Gastrocnemius medialis (tissue), 4 donors: ENCODE measurements at regions of chr17 and their contacts with region 1.

Region 1: DNA sequence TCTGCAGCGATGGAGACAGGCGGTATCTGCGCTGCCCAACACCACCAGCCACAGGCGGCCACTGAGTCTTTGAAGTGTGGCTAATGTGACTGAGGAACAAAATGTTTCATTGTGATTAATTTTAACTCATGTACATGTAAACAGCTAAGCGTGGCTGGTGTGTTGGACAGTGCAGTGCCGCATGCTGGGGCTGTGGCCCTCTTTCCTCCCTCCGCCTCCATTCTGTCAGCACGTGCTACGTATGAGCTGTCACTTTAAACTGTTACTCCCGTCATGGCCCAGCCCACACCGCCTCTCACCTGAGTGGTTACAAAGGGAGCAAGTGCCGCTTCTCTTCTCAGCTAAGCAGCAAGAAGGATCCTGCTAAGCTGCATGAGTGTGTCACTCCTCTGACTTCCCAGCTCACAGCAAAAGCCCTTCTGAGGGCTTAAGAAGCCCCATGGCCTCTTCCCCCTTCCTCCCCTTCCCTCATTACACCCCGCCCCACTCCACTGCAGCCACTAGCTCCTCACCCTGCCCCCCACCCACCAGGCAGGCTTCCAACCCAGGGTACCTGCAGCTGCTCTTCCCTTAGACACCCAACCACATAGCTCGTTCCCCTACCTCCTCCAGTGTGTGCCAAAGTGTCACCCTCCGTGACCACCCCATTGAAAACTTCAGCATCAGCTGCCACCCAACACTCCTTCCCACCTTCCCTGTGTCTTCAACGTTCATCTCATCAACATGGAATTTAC is 15.0 kb downstream of the HASPIN start:
- DNase-seq: peak; percentile 56 to 79
- ATAC-seq: peak; percentile 49 to 84
- H3K4me3 ChIP-seq: peak overlapping the region; percentile 35 to 50 (median 44)
- H3K27ac ChIP-seq: peak overlapping the region; percentile 72 to 84 (median 80)
- H3K4me1 ChIP-seq: peaks cover 4 to 11% of the 10 kb centered on the region in 2 donors
- H3K27me3 ChIP-seq: no peaks in the 10 kb centered on the region
- CTCF ChIP-seq: no peak
- POLR2A ChIP-seq: peak; percentile 36 to 50

Region 2: GRCh38 chr17:3818786-3819185 is 80.1 kb after region 1 on chr17:
- in situ Hi-C with region 1: loop called in 3 of 4 experiments (anchors 5 to 10 kb)
- intact Hi-C with region 1: no loop called
- DNase-seq: no peak
- ATAC-seq: no peak
- H3K4me3 ChIP-seq: no peak overlapping the region
- H3K27ac ChIP-seq: no peak overlapping the region
- H3K4me1 ChIP-seq: peaks cover 15 to 17% of the 10 kb centered on the region in 2 donors
- H3K27me3 ChIP-seq: no peaks in the 10 kb centered on the region
- CTCF ChIP-seq: no peak
- POLR2A ChIP-seq: no peak

Region 3: DNA sequence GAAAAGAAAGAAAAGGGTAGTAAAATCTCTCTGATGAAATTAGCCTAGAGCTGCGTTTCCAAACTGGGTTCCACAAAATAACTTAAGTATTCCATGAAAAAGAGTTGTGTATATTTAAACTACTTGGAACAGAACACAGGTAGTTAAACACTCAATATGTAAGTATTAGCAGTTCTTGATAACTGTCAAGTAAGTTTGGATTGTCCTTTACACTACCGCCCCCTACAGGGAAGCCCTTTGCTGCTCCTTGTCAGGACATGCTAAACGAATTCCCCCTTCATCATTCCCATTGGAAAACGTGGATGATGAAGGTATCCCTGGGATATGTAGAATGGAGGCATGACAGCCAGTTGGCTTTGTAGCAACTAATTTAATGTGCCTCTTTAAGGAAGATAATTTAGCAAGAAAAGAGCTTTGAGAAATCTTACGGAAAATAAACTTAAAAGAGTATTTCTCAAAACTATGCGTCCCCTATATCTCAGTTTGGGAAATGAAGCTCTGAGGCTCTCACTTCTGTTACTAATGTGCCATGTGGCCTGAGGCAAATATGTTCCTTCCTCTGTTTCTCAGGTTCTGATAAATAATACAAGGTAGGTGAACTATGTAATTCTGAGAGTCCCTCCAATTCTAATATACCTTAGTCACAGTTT is 88.5 kb after region 1 on chr17:
- in situ Hi-C with region 1: loop called in 2 of 4 experiments (anchors 5 to 10 kb)
- intact Hi-C with region 1: loop called (anchors 1 kb)
- DNase-seq: peak in 1 of 2 donors; percentile 31
- ATAC-seq: no peak
- H3K4me3 ChIP-seq: no peak overlapping the region
- H3K27ac ChIP-seq: no peak overlapping the region
- H3K4me1 ChIP-seq: peaks cover 17 to 24% of the 10 kb centered on the region in 2 donors
- H3K27me3 ChIP-seq: no peaks in the 10 kb centered on the region
- CTCF ChIP-seq: peak in 4 of 5 experiments; percentile 17 to 49 (median 23)
- POLR2A ChIP-seq: no peak

Region 4: GRCh38 chr17:3845621-3846441 is 107.1 kb after region 1 on chr17 and contains the start of gene NCBP3:
- in situ Hi-C with region 1: loop called in 2 of 4 experiments (anchors 10 kb)
- intact Hi-C with region 1: loop called (anchors 1 kb)
- DNase-seq: peak; percentile 82 to 85
- ATAC-seq: peak; percentile 95
- H3K4me3 ChIP-seq: peak within 1 kb of the TSS; percentile 74 to 100 (median 95)
- H3K27ac ChIP-seq: peak within 1 kb of the TSS; percentile 90 to 97 (median 95)
- H3K4me1 ChIP-seq: peaks cover 6 to 16% of the 10 kb centered on the region in 2 donors
- H3K27me3 ChIP-seq: no peaks in the 10 kb centered on the region
- CTCF ChIP-seq: peak; percentile 92 to 99 (median 96)
- POLR2A ChIP-seq: peak; percentile 93 to 94
- total RNA-seq, gene NCBP3: 9.5 to 15.2 (median 14.5) TPM

Region 5: DNA sequence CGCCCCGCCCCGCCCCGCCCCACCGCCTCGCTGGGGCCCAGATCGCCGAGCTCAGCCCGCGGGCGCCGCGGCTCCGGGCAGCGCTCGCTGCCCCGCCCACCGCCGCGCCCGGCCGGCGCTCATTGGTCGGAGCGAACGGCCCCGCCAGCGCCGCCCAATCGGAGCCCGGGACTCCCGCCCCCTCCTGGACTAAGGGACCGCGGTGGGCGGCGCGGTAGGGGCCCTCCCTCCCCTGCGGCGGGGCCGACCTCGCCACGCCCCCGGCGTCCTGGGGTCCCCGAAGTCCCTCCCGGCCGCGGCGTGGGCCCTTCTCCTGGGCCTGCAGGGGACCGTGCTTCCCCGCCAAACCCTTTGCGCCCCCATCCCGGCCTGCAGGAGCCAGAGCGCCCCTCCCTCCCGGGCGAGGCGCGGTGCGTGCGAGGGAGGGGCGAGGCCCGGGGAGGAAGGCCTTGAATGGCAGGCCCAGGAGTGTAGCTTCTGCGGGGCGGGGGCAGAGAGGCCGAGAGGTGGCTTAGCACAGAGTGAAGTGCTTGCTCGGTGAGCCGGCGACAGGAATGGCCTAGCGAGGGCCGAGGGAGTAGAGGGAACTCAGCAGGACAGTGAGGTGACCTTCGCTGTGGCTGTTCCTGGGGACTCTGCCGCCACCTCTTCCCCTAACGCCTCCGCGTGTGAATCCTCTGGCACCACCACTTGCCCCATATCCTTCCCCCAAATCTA is 154.4 kb after region 1 on chr17 and contains the start of gene CAMKK1:
- in situ Hi-C with region 1: no loop called
- intact Hi-C with region 1: loop called (anchors 5 kb)
- DNase-seq: peak; percentile 79 to 84
- ATAC-seq: peak; percentile 75 to 76
- H3K4me3 ChIP-seq: peak within 1 kb of the TSS; percentile 61 to 84 (median 72)
- H3K27ac ChIP-seq: peak within 1 kb of the TSS; percentile 75 to 81 (median 79)
- H3K4me1 ChIP-seq: peaks cover 32 to 37% of the 10 kb centered on the region in 2 donors
- H3K27me3 ChIP-seq: no peaks in the 10 kb centered on the region
- CTCF ChIP-seq: peak in 1 of 5 experiments; percentile 12
- POLR2A ChIP-seq: peak; percentile 37 to 54
- total RNA-seq, gene CAMKK1: 0.44 to 5.1 (median 2.1) TPM

Region 6: GRCh38 chr17:4074831-4075495 is 336.2 kb after region 1 on chr17:
- in situ Hi-C with region 1: no loop called
- intact Hi-C with region 1: loop called (anchors 10 kb)
- DNase-seq: no peak
- ATAC-seq: peak; percentile 17 to 42
- H3K4me3 ChIP-seq: no peak overlapping the region
- H3K27ac ChIP-seq: peak overlapping the region; percentile 83 to 97 (median 86)
- H3K4me1 ChIP-seq: peaks cover 26 to 31% of the 10 kb centered on the region in 2 donors
- H3K27me3 ChIP-seq: no peaks in the 10 kb centered on the region
- CTCF ChIP-seq: peak; percentile 27 to 80 (median 64)
- POLR2A ChIP-seq: no peak